ENCODE measurements at regions of chr7 and their contacts with region 1.

Region 1: GRCh38 chr7:148262721-148263229 is 327.8 kb upstream of the C7orf33 start:
- DNase-seq: peak in 2 of 3 donors; percentile 74 to 81
- ATAC-seq: peak; percentile 85
- H3K4me3 ChIP-seq: no peak overlapping the region
- H3K4me1 ChIP-seq: no peaks in the 10 kb centered on the region
- CTCF ChIP-seq: peak; percentile 91

Region 2: DNA sequence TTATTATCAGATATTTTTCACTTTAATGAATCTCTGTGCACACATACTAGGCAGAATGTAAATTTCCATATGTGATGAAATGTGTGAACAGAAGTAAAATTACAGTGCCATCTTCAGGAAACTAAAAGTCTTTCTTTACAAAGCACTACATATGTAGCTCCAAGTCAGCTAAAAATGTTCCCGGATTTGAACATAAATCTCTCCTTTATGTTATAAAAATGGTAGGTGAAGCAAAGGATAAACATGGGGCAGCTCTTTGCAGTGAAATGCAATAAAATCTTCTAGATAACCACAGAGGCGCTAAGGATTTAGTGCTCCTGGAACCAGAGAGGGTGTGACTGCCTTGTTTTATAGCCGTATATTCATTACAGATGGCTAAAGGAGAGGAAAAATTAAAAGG is 222.8 kb after region 1 on chr7:
- intact Hi-C with region 1: loop called in 1 of 2 experiments (anchors 10 kb)
- DNase-seq: peak in 1 of 3 donors; percentile 39
- ATAC-seq: peak; percentile 93
- H3K4me3 ChIP-seq: no peak overlapping the region
- H3K4me1 ChIP-seq: peaks cover 19% of the 10 kb centered on the region
- CTCF ChIP-seq: no peak